AG04449 (cell line): ENCODE measurements at regions of chr19 and their contacts with region 1.

Region 1: GRCh38 chr19:2168619-2169424 is 5.1 kb downstream of the DOT1L start:
- DNase-seq: peak; percentile 78
- H3K4me3 ChIP-seq: peak overlapping the region; percentile 23
- CTCF ChIP-seq: no peak

Region 2: GRCh38 chr19:2186071-2186846 is 17.4 kb after region 1 on chr19:
- CTCF ChIA-PET with region 1: interaction called, 6 read pairs
- POLR2A ChIA-PET with region 1: interaction called, 23 read pairs
- DNase-seq: peak; percentile 93
- H3K4me3 ChIP-seq: peak overlapping the region; percentile 27
- CTCF ChIP-seq: no peak